Calu3 (cell line): ENCODE measurements at regions of chr4 and their contacts with region 1.

Region 1: GRCh38 chr4:53377319-53378170 is at the start of gene FIP1L1:
- DNase-seq: peak; percentile 92
- H3K4me3 Mint-ChIP-seq: peak within 1 kb of the TSS; percentile 94
- H3K27ac Mint-ChIP-seq: peak within 1 kb of the TSS; percentile 88
- H3K4me1 Mint-ChIP-seq: peaks cover 13% of the 10 kb centered on the region
- H3K27me3 Mint-ChIP-seq: no peaks in the 10 kb centered on the region
- CTCF ChIP-seq: no peak
- total RNA-seq, gene FIP1L1: 45.7 and 56.3 TPM in 2 replicates

Region 2: GRCh38 chr4:53196882-53197771 is 180.4 kb before region 1 on chr4:
- CTCF ChIA-PET with region 1: interaction called, 3 read pairs
- intact Hi-C with region 1: loop called (anchors 10 kb)
- DNase-seq: peak; percentile 9
- H3K4me3 Mint-ChIP-seq: no peak overlapping the region
- H3K27ac Mint-ChIP-seq: no peak overlapping the region
- H3K4me1 Mint-ChIP-seq: no peaks in the 10 kb centered on the region
- H3K27me3 Mint-ChIP-seq: no peaks in the 10 kb centered on the region
- CTCF ChIP-seq: peak; percentile 41

Region 3: DNA sequence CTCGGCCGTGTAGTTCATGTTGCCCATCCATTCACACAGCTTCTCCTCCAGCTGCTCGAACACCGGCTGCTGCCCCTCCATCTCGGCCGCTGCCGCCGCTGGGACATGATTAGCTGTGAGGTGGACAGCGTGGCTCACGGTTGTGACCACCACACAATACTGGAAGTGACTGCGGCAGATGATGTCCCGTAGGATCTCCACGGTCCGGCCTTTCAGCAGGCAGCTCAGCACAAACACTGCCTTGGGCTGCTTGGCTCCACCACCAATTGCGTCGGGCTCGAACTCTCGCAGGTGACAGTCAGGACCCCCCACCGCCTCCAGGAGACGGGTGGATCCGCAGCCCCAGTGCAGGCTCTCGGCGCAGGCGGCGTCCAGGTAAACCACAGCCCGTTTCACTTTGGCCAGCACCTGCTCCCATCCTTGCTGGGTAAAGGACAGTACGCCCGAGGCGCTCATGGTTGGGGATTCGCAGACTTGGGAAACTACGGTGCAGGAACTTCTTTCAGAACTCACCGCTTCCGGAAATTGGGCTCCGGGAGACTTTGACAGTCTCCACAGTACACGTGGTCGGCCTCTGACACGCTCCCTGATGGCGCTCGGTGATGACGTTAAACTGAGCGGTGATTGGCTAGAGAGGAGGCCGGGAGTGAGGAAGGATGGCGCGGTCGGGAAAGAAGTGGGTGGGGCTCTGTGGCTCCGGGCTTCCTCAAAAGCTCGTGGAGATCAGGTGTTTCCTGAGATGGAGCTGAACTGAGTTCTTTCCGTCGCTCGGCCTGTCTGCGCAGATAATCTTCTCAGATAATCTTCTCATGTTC is 11.9 kb before region 1 on chr4 and contains the start of gene SCFD2:
- CTCF ChIA-PET with region 1: interaction called, 3 read pairs
- intact Hi-C with region 1: loop called (anchors 1 kb)
- DNase-seq: peak; percentile 91
- H3K4me3 Mint-ChIP-seq: peak within 1 kb of the TSS; percentile 85
- H3K27ac Mint-ChIP-seq: peak within 1 kb of the TSS; percentile 84
- H3K4me1 Mint-ChIP-seq: peaks cover 21% of the 10 kb centered on the region
- H3K27me3 Mint-ChIP-seq: peaks cover 33% of the 10 kb centered on the region
- CTCF ChIP-seq: no peak
- total RNA-seq, gene SCFD2: 16.7 and 17.1 TPM in 2 replicates